ENCODE measurements at regions of chr11 and their contacts with region 1.

Region 1: DNA sequence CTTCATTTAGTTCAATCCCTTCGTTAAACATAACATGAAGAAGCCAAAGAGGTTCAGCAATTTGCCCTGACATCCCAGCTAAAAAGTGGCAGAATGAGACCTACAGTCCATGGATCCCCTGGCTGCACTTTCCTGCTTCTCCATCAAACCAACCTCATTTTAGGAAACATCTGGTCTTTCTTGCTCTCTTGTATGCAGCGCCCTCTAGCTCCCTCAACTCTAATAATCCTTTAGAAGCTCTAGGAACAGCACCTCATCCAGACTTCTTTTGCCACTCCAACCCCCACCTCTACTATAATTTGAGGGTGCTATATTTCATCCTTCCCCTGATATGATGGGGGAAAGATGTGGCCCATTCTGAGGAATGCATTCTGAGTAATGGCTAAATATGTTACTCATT is 7.4 kb downstream of the CNTF start:
- DNase-seq: no peak

Region 2: GRCh38 chr11:58579192-58580129 is 50.4 kb before region 1 on chr11:
- intact Hi-C with region 1: loop called in 1 of 2 experiments (anchors 10 kb)
- DNase-seq: peak; percentile 97

Region 3: DNA sequence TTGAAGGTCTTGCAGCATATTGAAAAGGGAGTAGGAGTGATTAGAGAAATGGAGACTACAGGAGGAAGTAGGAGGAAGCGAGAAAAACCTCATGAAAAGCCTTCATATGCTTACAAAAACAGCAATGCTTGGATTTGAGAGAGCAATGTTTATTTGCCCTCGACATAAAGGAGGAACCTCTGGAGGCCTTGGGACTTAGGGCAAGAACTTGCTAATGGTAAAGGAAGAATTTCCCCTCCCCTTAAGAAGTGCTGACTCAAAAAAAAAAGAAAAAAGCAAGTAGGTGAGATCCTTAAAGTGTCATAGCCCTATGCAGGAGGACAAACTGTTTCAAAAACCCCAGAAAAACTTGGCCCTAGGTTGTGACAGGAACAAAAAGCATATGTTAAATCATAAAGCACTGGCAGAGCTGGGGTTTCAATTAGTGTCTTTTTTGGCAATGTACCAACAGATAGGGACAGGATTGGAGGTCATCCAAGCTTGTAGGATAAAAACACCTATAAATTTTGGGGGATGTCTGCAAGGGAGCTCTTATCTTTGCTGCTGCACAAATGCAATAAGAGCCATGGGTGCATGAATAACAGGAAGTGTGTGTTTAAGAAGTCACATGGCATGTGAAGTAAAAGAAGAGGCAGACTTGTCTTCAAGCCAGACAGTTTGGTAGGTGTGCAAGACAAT is 97.0 kb after region 1 on chr11:
- intact Hi-C with region 1: no loop called
- DNase-seq: no peak

Measured in posterior vena cava (tissue), 2 donors.